H1 (cell line): ENCODE measurements at regions of chr11 and their contacts with region 1.

Region 1: DNA sequence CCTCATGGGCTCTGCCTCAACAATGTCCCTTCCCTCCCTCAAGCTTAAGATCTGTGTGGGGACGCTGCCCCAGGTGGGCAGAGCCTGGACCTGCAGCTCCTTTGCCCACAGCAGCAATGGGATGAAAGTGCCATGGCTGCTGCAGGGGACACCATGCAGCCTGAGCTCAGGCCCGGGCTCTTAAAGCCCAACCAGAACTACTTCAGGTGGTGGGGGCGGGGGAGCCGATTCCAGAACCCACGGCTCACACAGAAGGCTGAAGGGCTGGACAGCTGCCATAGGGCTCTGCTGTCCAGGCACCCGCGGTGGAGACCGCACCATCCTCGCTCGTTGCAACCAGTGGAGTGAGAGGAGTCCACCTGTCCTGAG is 12.5 kb downstream of the CHID1 start:
- DNase-seq: no peak
- H3K4me3 ChIP-seq: no peak overlapping the region
- H3K27ac ChIP-seq: no peak overlapping the region; the same call in 1 of the 2 replicates
- H3K4me1 ChIP-seq: no peaks in the 10 kb centered on the region; a peak in 2 of 7 replicates
- H3K27me3 ChIP-seq: no peaks in the 10 kb centered on the region
- CTCF ChIP-seq: peak in 2 of 3 experiments; percentile 46 to 75; a peak in 2 of 4 replicates
- EP300 ChIP-seq: no peak
- POLR2A ChIP-seq: no peak
- RAD21 ChIP-seq: peak; percentile 52 to 70; a peak in 3 of 4 replicates

Region 2: GRCh38 chr11:942823-943222 is 44.7 kb after region 1 on chr11:
- CTCF ChIA-PET with region 1: interaction called, 10 read pairs
- POLR2A ChIA-PET with region 1: no interaction called
- DNase-seq: no peak
- H3K4me3 ChIP-seq: no peak overlapping the region
- H3K27ac ChIP-seq: no peak overlapping the region
- H3K4me1 ChIP-seq: peaks cover 25 to 41% (median 33%) of the 10 kb centered on the region in 4 experiments
- H3K27me3 ChIP-seq: no peaks in the 10 kb centered on the region
- CTCF ChIP-seq: no peak
- EP300 ChIP-seq: no peak
- POLR2A ChIP-seq: no peak
- RAD21 ChIP-seq: no peak